Activated T-helper 1 cell treated with anti-CD3 and anti-CD28 coated beads, Interleukin-12 subunit alpha, Interleukin-12 subunit beta, Interleukin-2, Interleukin-4 antibody, amounts not matched to agents 30 ng/mL and 10 ng/mL and 1 ng/mL, durations not matched to agents 14 hours and 24 hours and 36 hours (primary cell): ENCODE measurements at regions of chr1 and their contacts with region 1.

Region 1: DNA sequence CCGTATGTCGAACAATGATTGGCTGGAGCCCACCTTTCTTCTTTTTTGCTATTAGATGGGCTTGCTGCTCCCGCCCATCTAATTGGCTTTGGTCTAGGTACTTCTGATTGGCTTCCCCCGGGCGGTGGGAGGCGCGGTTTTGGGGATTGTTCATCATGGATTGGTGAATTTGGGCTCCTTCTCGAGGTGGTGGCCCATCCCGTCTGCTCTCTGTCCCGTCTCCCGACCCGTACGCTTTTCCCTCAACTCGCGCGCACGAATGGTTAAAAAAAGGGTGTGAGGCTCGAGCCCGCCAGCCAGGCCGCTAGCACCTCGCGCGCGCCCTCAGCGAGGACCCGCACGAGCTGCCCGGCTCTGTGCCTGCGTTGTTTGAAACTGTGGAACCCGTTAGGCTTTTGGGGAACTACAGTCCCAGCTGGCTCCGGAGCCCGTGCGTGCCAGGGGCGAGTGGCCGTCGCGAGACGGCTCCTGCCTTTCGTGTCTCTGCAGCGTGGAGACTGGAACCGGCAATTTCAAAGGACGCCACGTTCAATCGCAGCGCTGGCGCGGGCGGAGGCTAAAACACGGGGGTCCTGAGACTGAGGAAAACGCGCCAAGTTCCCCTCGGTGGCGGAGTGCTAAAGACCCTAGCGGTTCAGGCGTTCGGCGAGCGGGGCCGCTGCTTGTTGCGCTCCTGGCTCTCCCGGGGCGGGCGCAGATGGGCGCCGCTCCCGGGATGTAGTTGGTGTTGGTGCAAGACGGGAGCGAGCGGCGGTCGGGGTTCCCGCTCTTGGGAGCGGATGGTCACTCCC is at the start of gene USP1:
- DNase-seq: peak; percentile 98
- H3K4me3 Mint-ChIP-seq: peak within 1 kb of the TSS; percentile 94
- H3K27ac Mint-ChIP-seq: peak within 1 kb of the TSS; percentile 99
- H3K4me1 Mint-ChIP-seq: peaks cover 41% of the 10 kb centered on the region
- H3K27me3 Mint-ChIP-seq: peaks cover 8% of the 10 kb centered on the region
- total RNA-seq, gene USP1: 77.8 and 78.7 TPM in 2 replicates

Region 2: GRCh38 chr1:61077676-61078541 is 1358.8 kb before region 1 on chr1:
- intact Hi-C with region 1: loop called (anchors 5 kb)
- DNase-seq: peak; percentile 80
- H3K4me3 Mint-ChIP-seq: peak overlapping the region; percentile 92
- H3K27ac Mint-ChIP-seq: peak overlapping the region; percentile 16
- H3K4me1 Mint-ChIP-seq: peaks cover 43% of the 10 kb centered on the region
- H3K27me3 Mint-ChIP-seq: peaks cover 50% of the 10 kb centered on the region

Region 3: GRCh38 chr1:61436016-61436415 is 1000.6 kb before region 1 on chr1:
- intact Hi-C with region 1: no loop called
- DNase-seq: no peak
- H3K4me3 Mint-ChIP-seq: no peak overlapping the region
- H3K27ac Mint-ChIP-seq: no peak overlapping the region
- H3K4me1 Mint-ChIP-seq: no peaks in the 10 kb centered on the region
- H3K27me3 Mint-ChIP-seq: peaks cover 20% of the 10 kb centered on the region

Region 4: GRCh38 chr1:61782771-61783170 is 653.9 kb before region 1 on chr1:
- intact Hi-C with region 1: loop called (anchors 5 kb)
- DNase-seq: peak; percentile 70
- H3K4me3 Mint-ChIP-seq: no peak overlapping the region
- H3K27ac Mint-ChIP-seq: peak overlapping the region; percentile 78
- H3K4me1 Mint-ChIP-seq: peaks cover 57% of the 10 kb centered on the region
- H3K27me3 Mint-ChIP-seq: no peaks in the 10 kb centered on the region

Region 5: DNA sequence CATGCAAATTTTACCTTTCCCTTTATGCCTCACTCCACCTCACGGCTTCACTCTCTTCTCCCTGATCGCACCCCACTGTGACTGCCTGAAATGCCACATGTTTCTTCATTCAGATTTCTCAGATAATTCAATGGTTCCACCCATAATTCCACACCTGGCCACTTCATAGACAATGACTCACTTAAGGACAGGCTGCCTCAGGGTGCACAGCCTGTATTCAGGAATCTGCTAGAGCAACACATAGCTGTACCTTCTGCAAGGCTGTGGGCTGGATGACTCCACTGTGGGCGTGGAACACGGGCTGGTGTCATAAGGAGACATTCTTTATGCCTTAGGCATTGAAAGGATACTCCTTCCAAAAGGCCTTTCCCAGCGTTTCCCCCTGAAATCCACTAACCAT is 206.0 kb before region 1 on chr1:
- intact Hi-C with region 1: no loop called
- DNase-seq: no peak
- H3K4me3 Mint-ChIP-seq: no peak overlapping the region
- H3K27ac Mint-ChIP-seq: no peak overlapping the region
- H3K4me1 Mint-ChIP-seq: no peaks in the 10 kb centered on the region
- H3K27me3 Mint-ChIP-seq: peaks cover 2% of the 10 kb centered on the region

Region 6: GRCh38 chr1:62448221-62448933 is 11.7 kb after region 1 on chr1:
- intact Hi-C with region 1: loop called (anchors 1 kb)
- DNase-seq: no peak
- H3K4me3 Mint-ChIP-seq: no peak overlapping the region
- H3K27ac Mint-ChIP-seq: no peak overlapping the region
- H3K4me1 Mint-ChIP-seq: peaks cover 35% of the 10 kb centered on the region
- H3K27me3 Mint-ChIP-seq: no peaks in the 10 kb centered on the region

Region 7: GRCh38 chr1:62687903-62688686 is 251.4 kb after region 1 on chr1 and contains the start of gene DOCK7:
- intact Hi-C with region 1: loop called (anchors 1 kb)
- DNase-seq: peak; percentile 31
- H3K4me3 Mint-ChIP-seq: peak within 1 kb of the TSS; percentile 92
- H3K27ac Mint-ChIP-seq: peak within 1 kb of the TSS; percentile 81
- H3K4me1 Mint-ChIP-seq: peaks cover 18% of the 10 kb centered on the region
- H3K27me3 Mint-ChIP-seq: peaks cover 8% of the 10 kb centered on the region
- total RNA-seq, gene DOCK7: 13.4 and 13.6 TPM in 2 replicates

Region 8: GRCh38 chr1:63367215-63368103 is 930.8 kb after region 1 on chr1 and contains the start of gene ALG6:
- intact Hi-C with region 1: loop called (anchors 5 kb)
- DNase-seq: peak; percentile 93
- H3K4me3 Mint-ChIP-seq: peak within 1 kb of the TSS; percentile 90
- H3K27ac Mint-ChIP-seq: peak within 1 kb of the TSS; percentile 74
- H3K4me1 Mint-ChIP-seq: peaks cover 16% of the 10 kb centered on the region
- H3K27me3 Mint-ChIP-seq: peaks cover under 1% of the 10 kb centered on the region
- total RNA-seq, gene ALG6: 25.8 and 26.9 TPM in 2 replicates

Region 9: GRCh38 chr1:63593303-63593885 is 1156.7 kb after region 1 on chr1 and contains the start of gene PGM1:
- intact Hi-C with region 1: loop called (anchors 2 kb)
- DNase-seq: peak; percentile 68
- H3K4me3 Mint-ChIP-seq: peak within 1 kb of the TSS; percentile 95
- H3K27ac Mint-ChIP-seq: peak within 1 kb of the TSS; percentile 98
- H3K4me1 Mint-ChIP-seq: peaks cover 44% of the 10 kb centered on the region
- H3K27me3 Mint-ChIP-seq: no peaks in the 10 kb centered on the region
- total RNA-seq, gene PGM1: 38.9 and 39.8 TPM in 2 replicates